Mammary epithelial cell (primary cell): ENCODE measurements at regions of chr14 and their contacts with region 1.

Region 1: DNA sequence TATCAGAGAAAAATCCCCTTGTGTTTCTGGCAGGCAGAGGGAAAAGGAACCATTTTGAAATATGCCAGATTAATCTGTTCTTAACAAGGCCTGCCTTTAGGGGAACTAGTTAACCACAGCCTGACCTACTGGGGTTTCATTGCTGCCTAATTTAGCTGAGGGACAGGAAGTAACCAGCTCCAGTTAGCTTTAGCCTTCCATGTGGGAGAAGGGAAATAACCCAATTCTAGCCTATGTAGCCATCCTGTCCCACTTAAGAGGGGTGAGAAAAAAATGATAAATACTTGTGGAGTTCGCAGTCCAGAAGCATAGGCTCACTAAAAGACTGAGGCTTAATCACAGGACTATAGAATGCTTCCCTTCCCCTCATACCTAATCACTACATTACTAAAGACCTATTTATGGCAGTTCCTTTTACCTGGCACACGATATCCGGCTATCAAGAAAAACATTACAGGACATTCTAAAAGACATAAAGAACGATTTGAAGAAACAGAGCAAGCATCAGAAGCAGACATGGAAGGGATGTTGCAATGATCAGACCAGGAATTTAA is 22.8 kb downstream of the COX8C start:
- DNase-seq: peak; percentile 11
- H3K4me3 ChIP-seq: no peak overlapping the region
- H3K27ac ChIP-seq: no peak overlapping the region
- H3K4me1 ChIP-seq: no peaks in the 10 kb centered on the region
- H3K27me3 ChIP-seq: no peaks in the 10 kb centered on the region
- CTCF ChIP-seq: no peak

Region 2: DNA sequence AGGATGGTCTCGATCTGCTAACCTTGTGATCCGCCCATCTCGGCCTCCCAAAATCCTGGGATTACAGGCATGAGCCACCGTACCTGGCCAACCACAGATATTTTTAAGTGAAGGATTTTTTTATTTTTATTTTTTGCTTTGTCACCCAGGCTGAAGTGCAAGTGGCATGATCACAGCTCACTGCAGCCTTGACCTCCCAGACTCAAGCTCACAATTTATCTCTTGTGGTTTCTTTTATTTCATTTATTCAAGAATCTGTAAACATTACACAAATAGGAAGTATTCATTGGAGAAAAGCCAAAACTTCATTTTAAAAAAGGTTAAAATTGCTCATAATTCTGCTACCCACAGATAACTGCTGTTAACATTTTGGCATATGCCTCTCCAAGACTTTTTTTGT is 198.4 kb before region 1 on chr14:
- CTCF ChIA-PET with region 1: no interaction called
- dilution Hi-C with region 1: no loop called
- in situ Hi-C with region 1: no loop called
- intact Hi-C with region 1: no loop called
- DNase-seq: no peak
- H3K4me3 ChIP-seq: no peak overlapping the region
- H3K27ac ChIP-seq: no peak overlapping the region
- H3K4me1 ChIP-seq: no peaks in the 10 kb centered on the region
- H3K27me3 ChIP-seq: no peaks in the 10 kb centered on the region
- CTCF ChIP-seq: no peak

Region 3: DNA sequence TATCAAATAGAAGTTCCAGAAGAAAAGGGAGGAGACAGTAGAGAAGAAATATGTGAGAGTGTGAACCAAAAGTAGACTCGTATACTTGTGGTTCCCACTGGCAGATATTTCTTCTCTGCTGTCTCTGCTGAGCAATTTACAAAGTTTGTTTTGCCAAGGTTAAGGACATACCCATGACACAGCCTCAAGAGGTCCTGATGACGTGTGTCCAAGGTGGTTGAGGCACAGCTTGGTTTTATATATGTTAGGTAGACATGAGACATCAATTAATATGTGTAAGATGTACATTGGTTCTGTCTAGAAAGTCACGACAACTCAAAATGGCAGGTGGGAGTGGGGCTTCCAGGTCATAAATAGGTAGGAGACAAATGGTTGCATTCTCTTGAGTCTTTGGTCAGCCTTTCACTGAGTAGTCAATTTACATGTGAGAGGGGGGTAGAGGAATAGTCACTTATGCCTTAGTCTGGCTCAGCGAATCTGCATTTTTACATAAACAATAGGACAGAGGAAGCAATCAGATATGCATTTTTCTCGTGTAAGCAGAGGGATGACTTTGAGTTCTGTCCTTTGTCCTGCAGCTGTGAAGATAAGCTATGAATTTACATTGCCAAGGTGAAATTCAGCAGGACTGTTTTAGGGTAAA is 33.0 kb after region 1 on chr14:
- CTCF ChIA-PET with region 1: no interaction called
- dilution Hi-C with region 1: no loop called
- in situ Hi-C with region 1: no loop called
- intact Hi-C with region 1: no loop called
- DNase-seq: no peak
- H3K4me3 ChIP-seq: no peak overlapping the region
- H3K27ac ChIP-seq: no peak overlapping the region
- H3K4me1 ChIP-seq: no peaks in the 10 kb centered on the region
- H3K27me3 ChIP-seq: no peaks in the 10 kb centered on the region
- CTCF ChIP-seq: no peak

Region 4: GRCh38 chr14:93464271-93464670 is 94.5 kb after region 1 on chr14:
- CTCF ChIA-PET with region 1: no interaction called
- dilution Hi-C with region 1: loop called (anchors 5 kb)
- in situ Hi-C with region 1: no loop called
- intact Hi-C with region 1: no loop called
- DNase-seq: no peak
- H3K4me3 ChIP-seq: no peak overlapping the region
- H3K27ac ChIP-seq: no peak overlapping the region
- H3K4me1 ChIP-seq: no peaks in the 10 kb centered on the region
- H3K27me3 ChIP-seq: peaks cover under 1% of the 10 kb centered on the region
- CTCF ChIP-seq: no peak